ENCODE measurements at regions of chr9 and their contacts with region 1.

Region 1: GRCh38 chr9:123305879-123306278 is 37.5 kb upstream of the STRBP start:
- DNase-seq: no peak
- ATAC-seq: no peak
- H3K4me3 ChIP-seq: no peak overlapping the region
- H3K4me3 Mint-ChIP-seq: no peak overlapping the region
- H3K27ac ChIP-seq: no peak overlapping the region
- H3K27ac Mint-ChIP-seq: peak overlapping the region; percentile 45
- H3K4me1 ChIP-seq: peaks cover 38% of the 10 kb centered on the region
- H3K4me1 Mint-ChIP-seq: peaks cover 42% of the 10 kb centered on the region
- H3K27me3 ChIP-seq: no peaks in the 10 kb centered on the region
- H3K27me3 Mint-ChIP-seq: no peaks in the 10 kb centered on the region
- CTCF ChIP-seq: no peak

Region 2: DNA sequence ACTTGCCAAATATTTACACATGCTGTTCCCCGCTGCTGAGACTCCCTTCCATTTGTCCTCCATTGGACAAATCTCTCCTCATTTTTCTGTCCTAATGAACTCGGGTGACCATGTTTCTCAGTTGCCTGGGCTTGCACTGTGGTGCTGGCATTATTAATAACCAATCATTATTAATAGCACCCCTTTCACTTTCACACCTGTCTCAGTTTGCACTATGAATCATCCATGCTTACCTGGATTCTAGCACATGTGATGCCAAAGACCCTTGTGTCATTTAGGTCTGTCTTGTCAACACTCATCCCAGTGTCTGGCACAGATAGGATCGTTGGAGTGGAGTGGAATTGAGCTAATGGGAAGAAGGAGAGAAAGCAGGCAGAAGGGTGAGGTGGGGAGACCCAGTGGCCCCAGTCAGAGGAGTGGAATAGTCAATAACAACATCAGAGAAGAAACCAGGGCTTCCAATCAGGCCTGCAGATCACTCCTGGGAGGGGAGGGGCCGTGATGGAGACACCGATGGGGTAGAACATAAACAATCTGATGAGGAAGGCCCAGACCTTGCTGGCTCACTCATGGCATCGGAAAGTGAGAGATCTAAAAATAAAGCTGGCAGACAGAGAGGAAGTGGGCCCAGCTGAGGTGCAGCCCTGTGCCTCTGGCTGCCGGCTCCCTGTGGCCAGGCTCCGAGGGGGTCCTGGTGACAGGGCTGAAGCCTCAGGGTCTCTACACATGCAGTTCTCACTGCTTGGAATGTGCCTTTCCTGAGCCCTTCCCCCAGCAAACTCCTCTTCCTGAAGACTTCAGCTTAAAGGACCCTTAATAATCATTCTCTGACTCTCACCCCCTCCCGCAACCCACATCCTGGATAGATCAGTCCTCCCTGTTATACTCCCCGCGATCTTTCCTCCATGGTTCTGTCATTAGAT is 16.7 kb after region 1 on chr9:
- CTCF ChIA-PET with region 1: no interaction called
- POLR2A ChIA-PET with region 1: interaction called, 13 read pairs
- intact Hi-C with region 1: loop called (anchors 1 to 2 kb)
- DNase-seq: peak; percentile 29 to 85 (median 71)
- ATAC-seq: peak; percentile 85
- H3K4me3 ChIP-seq: peak overlapping the region; percentile 26 to 30
- H3K4me3 Mint-ChIP-seq: peak overlapping the region; percentile 75
- H3K27ac ChIP-seq: peak overlapping the region; percentile 54 to 59
- H3K27ac Mint-ChIP-seq: peak overlapping the region; percentile 93
- H3K4me1 ChIP-seq: peaks cover 32% of the 10 kb centered on the region
- H3K4me1 Mint-ChIP-seq: peaks cover 44% of the 10 kb centered on the region
- H3K27me3 ChIP-seq: no peaks in the 10 kb centered on the region
- H3K27me3 Mint-ChIP-seq: no peaks in the 10 kb centered on the region
- CTCF ChIP-seq: no peak

Region 3: DNA sequence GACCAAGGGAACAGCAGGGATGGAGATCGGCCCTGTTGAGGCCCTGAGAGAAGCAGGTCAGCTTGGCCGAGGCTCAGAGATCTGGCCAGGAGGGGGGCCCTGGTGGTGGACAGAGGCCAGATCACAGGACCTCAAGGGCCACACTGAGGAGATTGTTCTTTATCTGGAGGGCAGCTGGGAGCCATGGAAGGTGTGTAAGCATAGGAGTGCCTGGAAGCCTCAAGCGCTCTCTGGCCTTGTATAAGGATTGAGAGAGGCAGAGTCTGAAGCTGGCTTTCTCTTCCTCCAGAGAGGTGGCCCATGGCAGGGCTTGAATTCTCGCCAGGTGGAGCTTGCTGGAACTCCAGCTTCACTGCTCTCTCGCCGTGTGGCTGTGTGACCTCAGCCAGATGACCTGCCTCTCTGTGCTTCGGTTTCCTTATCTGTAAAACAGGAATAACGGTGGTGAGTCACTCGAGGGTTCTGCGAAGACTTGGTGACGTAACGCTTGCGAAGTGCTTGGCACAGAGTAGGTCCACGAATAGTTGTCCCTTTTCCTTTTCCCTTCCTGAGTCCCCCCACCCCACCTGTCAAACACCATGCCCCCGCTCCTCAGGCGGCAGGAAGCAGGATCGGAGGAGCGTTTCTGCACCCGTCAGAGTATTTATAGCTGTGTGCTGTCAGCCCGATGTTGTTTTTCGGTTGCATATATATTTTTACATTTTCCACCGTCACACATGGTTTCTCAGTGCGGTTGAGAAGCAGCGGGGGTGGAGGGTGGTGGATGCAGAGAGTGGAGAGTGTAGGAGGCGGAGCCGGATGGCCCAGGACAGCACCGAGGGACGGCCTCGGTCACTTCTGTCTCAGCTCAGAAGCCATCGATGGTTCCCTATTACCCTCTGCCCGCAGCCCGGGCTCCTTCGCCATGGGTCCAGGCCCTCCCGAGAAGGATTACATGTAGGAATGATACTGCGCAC is 33.1 kb after region 1 on chr9:
- CTCF ChIA-PET with region 1: interaction called, 4 read pairs
- POLR2A ChIA-PET with region 1: no interaction called
- intact Hi-C with region 1: loop called in 1 of 2 experiments (anchors 2 kb)
- DNase-seq: peak; percentile 8 to 76 (median 58)
- ATAC-seq: peak; percentile 72
- H3K4me3 ChIP-seq: peak overlapping the region; percentile 53 to 65
- H3K4me3 Mint-ChIP-seq: peak overlapping the region; percentile 89
- H3K27ac ChIP-seq: peak overlapping the region; percentile 10 to 46
- H3K27ac Mint-ChIP-seq: peak overlapping the region; percentile 91
- H3K4me1 ChIP-seq: peaks cover 25% of the 10 kb centered on the region
- H3K4me1 Mint-ChIP-seq: peaks cover 28% of the 10 kb centered on the region
- H3K27me3 ChIP-seq: no peaks in the 10 kb centered on the region
- H3K27me3 Mint-ChIP-seq: no peaks in the 10 kb centered on the region
- CTCF ChIP-seq: no peak

Region 4: DNA sequence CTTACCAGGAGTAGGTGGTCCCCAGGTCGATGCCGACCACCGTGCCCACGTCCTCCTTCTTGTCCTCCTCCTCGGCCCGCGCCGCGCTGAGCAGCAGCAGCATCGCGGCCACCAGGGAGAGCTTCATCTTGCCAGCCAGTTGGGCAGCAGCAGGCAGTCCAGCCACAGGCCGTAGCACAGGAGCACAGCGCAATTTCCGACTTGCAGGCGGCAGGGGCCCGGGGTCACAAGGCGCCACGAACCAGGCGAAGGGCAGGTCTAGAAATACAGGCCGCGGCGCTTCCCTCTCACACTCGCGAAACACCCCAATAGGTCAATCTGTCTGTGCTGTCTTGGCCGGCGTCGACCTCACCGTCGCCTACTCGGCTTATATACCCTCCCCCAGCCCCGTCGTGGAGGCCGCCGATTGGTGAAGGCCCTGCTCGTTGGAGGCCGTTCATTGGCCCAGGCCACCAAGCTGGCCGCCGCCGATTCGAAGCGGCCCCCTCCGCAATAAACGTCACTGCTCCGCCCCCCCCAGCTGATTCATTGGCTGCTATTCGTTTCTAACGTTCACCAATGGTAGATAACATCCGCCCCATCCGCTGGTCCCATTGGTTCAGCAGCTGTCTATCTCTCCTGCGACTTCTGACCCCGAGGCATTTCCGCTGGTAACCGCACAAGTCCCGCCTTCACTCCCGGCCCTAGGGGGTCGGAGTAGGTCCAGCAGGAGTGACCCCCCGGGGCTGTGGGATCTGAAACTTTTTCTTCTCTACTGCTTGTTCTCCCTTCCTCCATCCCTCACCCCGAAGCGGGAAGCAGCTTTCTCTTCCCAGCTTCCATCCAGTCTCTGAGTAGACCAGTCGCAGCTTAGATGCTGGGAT is 1935.4 kb after region 1 on chr9 and contains the start of gene HSPA5:
- CTCF ChIA-PET with region 1: no interaction called
- POLR2A ChIA-PET with region 1: no interaction called
- intact Hi-C with region 1: no loop called
- DNase-seq: peak; percentile 98 to 100 (median 99)
- ATAC-seq: peak; percentile 90
- H3K4me3 ChIP-seq: peak within 1 kb of the TSS; percentile 91 to 93
- H3K4me3 Mint-ChIP-seq: peak within 1 kb of the TSS; percentile 97
- H3K27ac ChIP-seq: peak within 1 kb of the TSS; percentile 97 to 99
- H3K27ac Mint-ChIP-seq: peak within 1 kb of the TSS; percentile 99
- H3K4me1 ChIP-seq: peaks cover 46% of the 10 kb centered on the region
- H3K4me1 Mint-ChIP-seq: peaks cover 46% of the 10 kb centered on the region
- H3K27me3 ChIP-seq: no peaks in the 10 kb centered on the region
- H3K27me3 Mint-ChIP-seq: no peaks in the 10 kb centered on the region
- CTCF ChIP-seq: no peak
- total RNA-seq, gene HSPA5: 354 to 372 TPM